Activated CD4-positive, alpha-beta T cell treated with anti-CD3 and anti-CD28 coated beads for 36 hours (primary cell): ENCODE measurements at regions of chr13 and their contacts with region 1.

Region 1: DNA sequence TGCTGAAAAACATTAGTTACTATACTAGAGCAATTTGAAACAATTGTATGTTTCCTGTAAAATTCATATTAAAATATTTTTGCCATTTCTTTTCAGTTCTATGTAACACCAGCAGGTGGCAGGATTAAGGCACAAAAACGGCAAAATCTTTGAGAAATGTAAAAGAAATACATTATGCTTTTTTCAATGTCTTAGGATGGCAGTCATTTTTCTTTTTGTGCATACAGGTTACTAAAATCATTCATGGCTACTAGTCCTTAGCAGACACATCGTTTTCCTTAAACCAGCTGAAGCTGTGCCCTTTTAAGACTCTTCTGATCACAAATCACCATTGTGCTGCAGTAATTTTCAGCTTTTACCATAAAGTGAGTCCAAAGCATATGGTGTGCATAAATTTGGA is 800.7 kb upstream of the SLITRK5 start:
- DNase-seq: no peak
- ATAC-seq: no peak
- H3K4me3 Mint-ChIP-seq: no peak overlapping the region
- H3K27ac Mint-ChIP-seq: no peak overlapping the region
- H3K4me1 Mint-ChIP-seq: no peaks in the 10 kb centered on the region
- H3K27me3 Mint-ChIP-seq: no peaks in the 10 kb centered on the region

Region 2: GRCh38 chr13:87274209-87274819 is 403.9 kb after region 1 on chr13:
- CTCF ChIA-PET with region 1: interaction called, 21 read pairs
- POLR2A ChIA-PET with region 1: no interaction called
- intact Hi-C with region 1: loop called (anchors 1 kb)
- DNase-seq: peak; percentile 54
- ATAC-seq: no peak
- H3K4me3 Mint-ChIP-seq: no peak overlapping the region
- H3K27ac Mint-ChIP-seq: no peak overlapping the region
- H3K4me1 Mint-ChIP-seq: no peaks in the 10 kb centered on the region
- H3K27me3 Mint-ChIP-seq: no peaks in the 10 kb centered on the region

Region 3: GRCh38 chr13:87671031-87671752 is 800.7 kb after region 1 on chr13 and contains the start of gene SLITRK5:
- CTCF ChIA-PET with region 1: no interaction called
- POLR2A ChIA-PET with region 1: no interaction called
- intact Hi-C with region 1: loop called (anchors 5 kb)
- DNase-seq: peak; percentile 84
- ATAC-seq: peak; percentile 95
- H3K4me3 Mint-ChIP-seq: peak within 1 kb of the TSS; percentile 52
- H3K27ac Mint-ChIP-seq: no peak within 1 kb of the TSS
- H3K4me1 Mint-ChIP-seq: peaks cover 23% of the 10 kb centered on the region
- H3K27me3 Mint-ChIP-seq: peaks cover 43% of the 10 kb centered on the region
- total RNA-seq, gene SLITRK5: not detected